GM13976 (cell line): ENCODE measurements at regions of chr15 and their contacts with region 1.

Region 1: GRCh38 chr15:85618956-85619491 is 175.7 kb downstream of the KLHL25 start:
- DNase-seq: peak; percentile 45
- CTCF ChIP-seq: no peak

Region 2: GRCh38 chr15:85412956-85413854 is 205.8 kb before region 1 on chr15:
- in situ Hi-C with region 1: no loop called
- DNase-seq: peak; percentile 90
- CTCF ChIP-seq: no peak

Region 3: GRCh38 chr15:85840065-85840801 is 221.2 kb after region 1 on chr15:
- in situ Hi-C with region 1: loop called (anchors 25 kb)
- DNase-seq: peak; percentile 90
- CTCF ChIP-seq: peak; percentile 93